GM10248 (cell line): ENCODE measurements at regions of chr3 and their contacts with region 1.

Region 1: GRCh38 chr3:123723522-123724168 is 138.8 kb upstream of the HACD2 start:
- DNase-seq: peak; percentile 78
- CTCF ChIP-seq: peak; percentile 85

Region 2: GRCh38 chr3:123652346-123652984 is 71.2 kb before region 1 on chr3:
- CTCF ChIA-PET with region 1: interaction called, 70 read pairs
- POLR2A ChIA-PET with region 1: no interaction called
- DNase-seq: peak; percentile 77
- CTCF ChIP-seq: peak; percentile 89

Region 3: DNA sequence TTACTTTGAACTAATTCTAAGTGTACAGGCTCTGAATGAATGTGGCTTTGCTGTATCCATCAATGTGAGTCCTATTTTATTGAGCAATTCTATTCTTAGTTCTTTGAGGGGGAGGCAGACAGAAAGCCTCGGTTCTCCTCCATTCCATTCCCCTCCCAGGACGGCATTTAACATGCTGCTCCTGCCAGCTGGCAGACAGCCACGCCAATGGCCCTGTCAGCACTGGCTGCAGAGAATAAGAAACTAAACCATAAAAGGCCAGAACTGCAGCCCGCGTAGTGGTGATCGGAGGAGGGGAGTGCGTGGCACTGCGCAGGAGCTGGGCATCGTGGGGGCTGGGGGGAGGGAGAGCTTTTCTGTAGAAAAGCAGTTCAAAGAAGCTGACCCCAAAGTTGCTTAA is 62.7 kb before region 1 on chr3:
- CTCF ChIA-PET with region 1: interaction called, 70 read pairs
- POLR2A ChIA-PET with region 1: no interaction called
- DNase-seq: no peak
- CTCF ChIP-seq: no peak

Region 4: DNA sequence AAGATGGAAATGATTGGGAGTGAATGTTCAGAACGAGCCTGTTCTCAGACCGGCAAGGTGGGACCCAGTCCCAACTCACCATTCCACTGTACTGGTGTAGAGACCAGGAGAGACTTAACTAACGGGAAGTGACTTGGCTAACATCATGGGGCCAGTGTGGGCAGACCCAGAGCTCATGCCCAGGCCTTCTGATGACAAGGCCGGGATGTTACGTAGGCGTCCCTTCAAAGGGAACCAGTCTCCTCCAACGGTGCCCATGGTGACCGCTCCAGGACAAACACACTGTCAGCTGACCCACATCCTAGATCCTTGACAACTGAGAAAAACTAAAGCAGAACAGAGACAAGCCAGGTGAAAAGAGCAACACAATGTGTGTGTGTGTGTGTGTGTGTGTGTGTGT is 10.4 kb before region 1 on chr3:
- CTCF ChIA-PET with region 1: interaction called, 16 read pairs
- POLR2A ChIA-PET with region 1: no interaction called
- DNase-seq: no peak
- CTCF ChIP-seq: no peak

Region 5: GRCh38 chr3:123739754-123740153 is 16.1 kb after region 1 on chr3:
- CTCF ChIA-PET with region 1: interaction called, 17 read pairs
- POLR2A ChIA-PET with region 1: no interaction called
- DNase-seq: no peak
- CTCF ChIP-seq: no peak

Region 6: GRCh38 chr3:123859177-123859576 is 135.5 kb after region 1 on chr3:
- CTCF ChIA-PET with region 1: no interaction called
- POLR2A ChIA-PET with region 1: no interaction called
- DNase-seq: no peak
- CTCF ChIP-seq: no peak

Region 7: GRCh38 chr3:124019291-124019690 is 295.6 kb after region 1 on chr3:
- CTCF ChIA-PET with region 1: no interaction called
- POLR2A ChIA-PET with region 1: no interaction called
- DNase-seq: no peak
- CTCF ChIP-seq: no peak